CD4-positive, alpha-beta T cell (primary cell): ENCODE measurements at regions of chr3 and their contacts with region 1.

Region 1: DNA sequence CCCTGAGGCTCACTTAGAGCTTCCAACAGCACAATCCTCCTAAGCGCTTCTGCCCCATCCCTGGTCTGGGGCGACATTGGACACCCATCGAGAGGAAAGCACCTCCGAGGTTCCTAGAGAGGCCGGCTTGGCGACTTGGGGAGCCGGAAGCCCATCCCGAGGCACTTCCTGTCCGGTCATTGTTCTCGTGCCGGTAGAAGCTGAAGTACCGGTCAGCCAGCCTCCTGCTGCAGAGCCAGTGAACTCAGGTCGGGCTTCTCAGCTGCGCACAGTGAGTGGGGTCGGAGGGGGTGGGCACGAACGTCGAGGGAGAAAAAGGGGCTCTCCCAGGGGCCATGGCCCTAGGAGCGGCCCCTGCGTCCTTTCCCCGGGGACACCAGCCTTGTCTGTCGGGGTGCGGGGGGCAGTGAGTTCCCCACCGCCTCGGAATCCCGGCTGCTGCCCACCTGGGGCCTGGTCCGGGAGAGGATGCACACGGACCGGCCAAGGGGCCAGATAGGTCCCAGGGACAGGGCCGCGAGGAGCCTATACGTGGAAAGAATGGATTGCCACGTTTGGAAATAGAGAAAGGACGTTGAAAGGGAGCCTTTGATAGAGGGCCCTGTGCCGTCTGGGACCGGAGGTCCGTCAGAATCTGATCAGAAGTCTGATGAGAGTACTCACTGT is at the start of gene ZNF35:
- DNase-seq: peak in 6 of 14 experiments; percentile 7 to 49 (median 25)
- ATAC-seq: no peak
- H3K4me3 ChIP-seq: peak within 1 kb of the TSS; percentile 77
- H3K4me3 Mint-ChIP-seq: peak within 1 kb of the TSS; percentile 75
- H3K27ac ChIP-seq: no peak within 1 kb of the TSS
- H3K27ac Mint-ChIP-seq: no peak within 1 kb of the TSS
- H3K4me1 ChIP-seq: peaks cover 9% of the 10 kb centered on the region
- H3K4me1 Mint-ChIP-seq: peaks cover 29% of the 10 kb centered on the region
- H3K27me3 ChIP-seq: no peaks in the 10 kb centered on the region
- H3K27me3 Mint-ChIP-seq: no peaks in the 10 kb centered on the region
- CTCF ChIP-seq: no peak
- total RNA-seq, gene ZNF35: 0.52 to 0.59 TPM

Region 2: GRCh38 chr3:44729384-44729910 is 80.8 kb after region 1 on chr3 and contains the start of gene ZNF501:
- CTCF ChIA-PET with region 1: no interaction called
- POLR2A ChIA-PET with region 1: no interaction called
- intact Hi-C with region 1: loop called in 1 of 2 experiments (anchors 10 kb)
- DNase-seq: peak; percentile 62 to 91 (median 79)
- ATAC-seq: peak; percentile 96
- H3K4me3 ChIP-seq: peak within 1 kb of the TSS; percentile 81
- H3K4me3 Mint-ChIP-seq: peak within 1 kb of the TSS; percentile 97
- H3K27ac ChIP-seq: no peak within 1 kb of the TSS
- H3K27ac Mint-ChIP-seq: peak within 1 kb of the TSS; percentile 74
- H3K4me1 ChIP-seq: peaks cover 11% of the 10 kb centered on the region
- H3K4me1 Mint-ChIP-seq: peaks cover 18% of the 10 kb centered on the region
- H3K27me3 ChIP-seq: no peaks in the 10 kb centered on the region
- H3K27me3 Mint-ChIP-seq: no peaks in the 10 kb centered on the region
- CTCF ChIP-seq: no peak
- total RNA-seq, gene ZNF501: 0.22 to 0.47 TPM

Region 3: DNA sequence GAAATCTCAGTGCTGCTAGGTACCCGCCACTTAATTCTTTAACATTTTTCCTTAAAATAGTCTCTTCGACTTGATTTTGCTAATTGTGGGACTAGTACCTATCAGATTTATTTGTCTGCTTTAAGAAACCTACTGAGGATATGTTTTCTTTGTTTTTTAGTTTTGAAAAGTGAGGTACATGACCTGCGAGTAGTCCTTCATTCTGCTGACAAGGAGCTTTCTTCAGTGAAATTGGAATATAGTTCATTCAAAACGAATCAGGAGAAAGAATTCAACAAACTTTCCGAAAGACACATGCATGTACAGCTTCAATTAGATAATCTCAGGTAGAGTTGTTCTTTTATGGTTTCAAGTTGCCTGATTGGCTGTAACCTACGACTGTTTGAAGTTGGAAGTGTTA is 166.1 kb after region 1 on chr3:
- CTCF ChIA-PET with region 1: no interaction called
- POLR2A ChIA-PET with region 1: no interaction called
- intact Hi-C with region 1: no loop called
- DNase-seq: no peak
- ATAC-seq: no peak
- H3K4me3 ChIP-seq: no peak overlapping the region
- H3K4me3 Mint-ChIP-seq: no peak overlapping the region
- H3K27ac ChIP-seq: no peak overlapping the region
- H3K27ac Mint-ChIP-seq: no peak overlapping the region
- H3K4me1 ChIP-seq: no peaks in the 10 kb centered on the region
- H3K4me1 Mint-ChIP-seq: no peaks in the 10 kb centered on the region
- H3K27me3 ChIP-seq: no peaks in the 10 kb centered on the region
- H3K27me3 Mint-ChIP-seq: no peaks in the 10 kb centered on the region
- CTCF ChIP-seq: no peak